Heart left ventricle (tissue), 16 donors: ENCODE measurements at regions of chr17 and their contacts with region 1.

Region 1: DNA sequence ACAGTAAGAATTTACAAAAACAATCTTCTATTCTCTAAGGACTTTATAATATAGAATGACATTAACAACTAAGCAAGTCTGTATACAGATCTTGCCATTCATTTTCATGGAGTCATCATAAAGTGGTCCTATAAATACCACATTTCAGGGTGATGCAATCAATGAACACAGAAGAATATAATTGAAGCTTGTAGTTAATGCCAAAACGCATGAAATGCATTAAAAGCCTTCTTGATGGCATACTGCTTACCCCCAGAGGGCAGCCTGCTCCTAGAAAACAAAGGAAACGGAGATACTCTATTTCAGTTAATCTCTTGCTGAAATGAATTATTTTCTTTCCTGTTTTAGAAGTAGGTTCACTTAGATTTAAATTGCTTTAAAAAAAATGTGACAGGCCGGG is 45.2 kb upstream of the STAC2 start:
- DNase-seq: no peak
- ATAC-seq: peak in 1 of 4 donors; percentile 29
- H3K4me3 ChIP-seq: no peak overlapping the region
- H3K27ac ChIP-seq: no peak overlapping the region
- H3K4me1 ChIP-seq: no peaks in the 10 kb centered on the region
- H3K27me3 ChIP-seq: no peaks in the 10 kb centered on the region
- CTCF ChIP-seq: peak in 10 of 12 donors; percentile 17 to 50 (median 38)
- POLR2A ChIP-seq: no peak

Region 2: GRCh38 chr17:39393736-39394135 is 122.8 kb after region 1 on chr17:
- intact Hi-C with region 1: loop called in 3 of 10 experiments (anchors 2 to 10 kb)
- DNase-seq: no peak
- ATAC-seq: peak in 2 of 4 donors; percentile 36 to 38
- H3K4me3 ChIP-seq: no peak overlapping the region
- H3K27ac ChIP-seq: no peak overlapping the region
- H3K4me1 ChIP-seq: peaks cover 0 to 30% (median 14%) of the 10 kb centered on the region in 12 donors
- H3K27me3 ChIP-seq: no peaks in the 10 kb centered on the region
- CTCF ChIP-seq: peak in 7 of 12 donors; percentile 10 to 47 (median 29)
- POLR2A ChIP-seq: no peak

Region 3: GRCh38 chr17:39401412-39402243 is 130.7 kb after region 1 on chr17 and contains the start of gene FBXL20:
- intact Hi-C with region 1: loop called in 4 of 10 experiments (anchors 5 to 10 kb)
- DNase-seq: peak; percentile 94 to 97 (median 96)
- ATAC-seq: peak; percentile 92 to 94 (median 94)
- H3K4me3 ChIP-seq: peak within 1 kb of the TSS; percentile 54 to 99 (median 91)
- H3K27ac ChIP-seq: peak within 1 kb of the TSS; percentile 77 to 96 (median 88)
- H3K4me1 ChIP-seq: peaks cover 0 to 30% (median 20%) of the 10 kb centered on the region in 12 donors
- H3K27me3 ChIP-seq: no peaks in the 10 kb centered on the region
- CTCF ChIP-seq: no peak
- POLR2A ChIP-seq: peak; percentile 67 to 95
- total RNA-seq, gene FBXL20: 9.7 to 21.9 (median 15.3) TPM